Activated CD4-positive, alpha-beta T cell treated with anti-CD3 and anti-CD28 coated beads, Interleukin-2, amount 10 ng/mL, durations not matched to agents 24 days and 14 days (primary cell): ENCODE measurements at regions of chr9 and their contacts with region 1.

Region 1: DNA sequence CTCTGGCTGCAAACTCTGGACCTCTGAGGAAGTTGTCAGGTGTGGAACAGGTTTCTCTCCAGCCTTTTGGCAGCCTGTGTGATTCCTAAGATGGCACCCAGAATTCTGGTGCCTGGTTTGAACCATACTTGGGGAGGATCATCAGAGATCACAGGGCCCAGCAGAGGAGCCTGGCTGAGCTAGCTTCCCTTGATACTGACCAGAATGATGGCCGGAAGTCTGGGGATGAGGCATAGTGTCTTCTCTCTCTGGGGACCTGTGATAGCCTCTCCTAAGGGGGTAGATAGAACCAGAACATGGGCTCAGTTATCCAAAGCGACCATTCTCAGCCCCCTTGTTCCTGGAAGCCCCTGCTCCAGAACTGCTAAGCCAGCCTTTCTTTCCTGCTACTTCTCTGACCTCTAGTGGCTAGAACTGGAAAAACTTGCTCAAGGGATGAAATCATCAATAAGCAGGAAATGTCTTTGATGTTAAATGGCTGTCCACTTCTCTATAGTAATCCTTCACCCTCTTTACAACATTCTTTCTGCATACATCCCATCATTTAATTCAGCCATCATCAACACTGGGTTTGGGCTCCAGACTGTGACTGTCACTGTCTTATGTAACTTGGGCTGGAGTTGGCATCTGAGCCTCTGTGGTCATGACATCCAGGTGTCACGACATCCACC is 55.1 kb downstream of the C9orf152 start:
- DNase-seq: peak; percentile 84
- H3K4me3 Mint-ChIP-seq: peak overlapping the region; percentile 42
- H3K27ac Mint-ChIP-seq: peak overlapping the region; percentile 74
- H3K4me1 Mint-ChIP-seq: peaks cover 95% of the 10 kb centered on the region
- H3K27me3 Mint-ChIP-seq: no peaks in the 10 kb centered on the region

Region 2: GRCh38 chr9:109469646-109470358 is 683.0 kb before region 1 on chr9:
- intact Hi-C with region 1: loop called (anchors 10 kb)
- DNase-seq: peak; percentile 91
- H3K4me3 Mint-ChIP-seq: no peak overlapping the region
- H3K27ac Mint-ChIP-seq: peak overlapping the region; percentile 50
- H3K4me1 Mint-ChIP-seq: peaks cover 29% of the 10 kb centered on the region
- H3K27me3 Mint-ChIP-seq: peaks cover 20% of the 10 kb centered on the region

Region 3: GRCh38 chr9:109817846-109818472 is 334.9 kb before region 1 on chr9:
- intact Hi-C with region 1: loop called (anchors 5 kb)
- DNase-seq: peak; percentile 87
- H3K4me3 Mint-ChIP-seq: no peak overlapping the region
- H3K27ac Mint-ChIP-seq: no peak overlapping the region
- H3K4me1 Mint-ChIP-seq: no peaks in the 10 kb centered on the region
- H3K27me3 Mint-ChIP-seq: peaks cover 3% of the 10 kb centered on the region

Region 4: DNA sequence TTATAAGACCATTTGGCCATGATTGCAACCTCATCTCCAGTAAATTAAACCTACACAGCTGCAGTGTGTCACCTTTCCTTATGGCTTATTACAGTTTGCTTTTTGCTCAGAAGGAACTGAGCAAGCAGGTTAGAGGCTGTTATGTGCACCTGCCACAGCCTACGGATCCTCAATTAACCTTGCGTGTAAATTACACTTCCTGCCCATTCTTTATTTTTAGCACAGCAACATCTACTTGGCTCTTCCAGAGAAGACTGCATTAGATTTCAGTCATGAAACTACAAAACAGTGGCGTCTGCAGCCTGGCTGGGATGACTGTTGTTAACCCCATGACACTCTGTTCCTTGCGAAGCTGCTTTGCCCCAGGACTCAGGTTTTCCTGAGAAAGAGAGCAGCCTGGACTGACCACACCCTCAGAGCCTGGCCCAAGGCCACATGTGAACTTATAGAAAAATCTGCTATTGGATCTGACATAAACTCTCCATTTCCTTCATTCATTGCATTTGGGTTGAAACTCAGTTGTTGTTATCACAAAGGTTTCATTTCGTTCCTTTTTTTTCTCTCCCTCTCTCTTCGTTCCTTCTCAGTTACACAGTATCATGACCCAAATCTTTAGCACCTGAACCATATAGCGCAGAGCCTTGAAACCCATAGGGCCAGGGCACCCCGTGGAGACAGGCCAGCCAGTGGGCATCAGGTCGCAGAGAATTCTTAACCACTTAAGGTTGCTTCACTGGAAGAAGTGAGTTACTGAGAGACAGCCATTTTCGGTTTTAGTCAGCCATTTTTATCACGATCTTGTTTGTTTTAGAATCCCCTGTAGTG is 234.3 kb before region 1 on chr9:
- intact Hi-C with region 1: loop called (anchors 1 kb)
- DNase-seq: peak; percentile 85
- H3K4me3 Mint-ChIP-seq: peak overlapping the region; percentile 85
- H3K27ac Mint-ChIP-seq: peak overlapping the region; percentile 97
- H3K4me1 Mint-ChIP-seq: peaks cover 50% of the 10 kb centered on the region
- H3K27me3 Mint-ChIP-seq: no peaks in the 10 kb centered on the region

Region 5: DNA sequence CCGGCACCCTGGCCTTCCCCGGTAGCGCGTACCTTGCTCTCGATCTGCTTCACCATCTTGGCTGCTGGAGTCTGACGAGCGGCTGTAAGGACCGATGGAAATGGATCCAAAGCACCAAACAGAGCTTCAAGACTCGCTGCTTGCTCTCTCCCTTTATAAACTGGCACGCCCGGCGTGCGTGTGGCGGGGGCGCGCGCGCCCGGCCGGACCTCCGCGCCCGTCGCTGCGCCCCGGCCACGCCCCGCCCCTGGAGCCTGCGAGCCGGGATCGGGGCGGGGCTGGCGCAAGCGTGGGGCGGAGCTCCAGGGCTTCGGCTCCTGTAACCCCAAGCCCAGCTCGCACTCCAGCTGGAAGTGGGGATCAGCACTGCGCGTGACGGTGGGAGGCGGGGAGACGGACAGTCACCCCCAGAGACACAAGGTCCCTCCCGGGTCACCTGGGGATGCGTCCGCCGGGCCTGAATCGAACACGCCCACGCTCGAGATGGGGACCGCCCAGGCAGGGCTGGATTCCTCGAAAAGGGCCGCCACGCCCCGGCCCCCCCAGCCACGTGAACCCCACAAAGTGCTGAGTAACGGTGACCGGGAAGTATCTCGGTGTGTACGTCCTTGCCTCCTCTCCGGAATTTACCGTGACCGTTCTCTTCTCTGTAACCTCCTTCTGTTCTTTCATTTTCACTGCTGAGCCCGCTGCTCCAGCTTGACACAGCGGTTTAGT is 103.7 kb after region 1 on chr9 and contains the start of gene TXN:
- intact Hi-C with region 1: loop called (anchors 5 kb)
- DNase-seq: peak; percentile 96
- H3K4me3 Mint-ChIP-seq: peak within 1 kb of the TSS; percentile 96
- H3K27ac Mint-ChIP-seq: peak within 1 kb of the TSS; percentile 99
- H3K4me1 Mint-ChIP-seq: peaks cover 43% of the 10 kb centered on the region
- H3K27me3 Mint-ChIP-seq: peaks cover 4% of the 10 kb centered on the region
- total RNA-seq, gene TXN: 463 TPM in 2 replicates